ENCODE measurements at regions of chr12 and their contacts with region 1.

Region 1: DNA sequence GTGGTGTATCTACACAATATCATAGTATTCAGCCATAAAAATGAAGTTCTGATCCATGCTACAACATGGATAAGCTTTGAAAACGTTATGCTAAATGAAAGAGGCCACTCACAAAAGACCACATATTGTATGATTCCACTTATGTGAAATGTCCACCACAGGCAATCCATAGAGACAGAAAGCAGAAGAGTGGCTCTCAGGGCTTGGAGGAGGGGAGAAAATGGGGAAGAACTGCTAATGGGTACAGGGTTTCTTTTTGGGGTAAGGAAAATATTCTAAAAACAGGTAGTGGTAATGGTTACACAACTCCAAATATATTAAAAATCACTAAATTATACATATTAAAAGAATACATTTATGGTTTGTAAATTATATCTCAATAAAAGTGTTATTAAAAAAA is 16.5 kb downstream of the SCNN1A start:
- DNase-seq: no peak
- H3K4me3 ChIP-seq: no peak overlapping the region
- H3K27ac ChIP-seq: no peak overlapping the region
- H3K4me1 ChIP-seq: peaks cover 8% of the 10 kb centered on the region
- H3K27me3 ChIP-seq: no peaks in the 10 kb centered on the region
- CTCF ChIP-seq: no peak

Region 2: DNA sequence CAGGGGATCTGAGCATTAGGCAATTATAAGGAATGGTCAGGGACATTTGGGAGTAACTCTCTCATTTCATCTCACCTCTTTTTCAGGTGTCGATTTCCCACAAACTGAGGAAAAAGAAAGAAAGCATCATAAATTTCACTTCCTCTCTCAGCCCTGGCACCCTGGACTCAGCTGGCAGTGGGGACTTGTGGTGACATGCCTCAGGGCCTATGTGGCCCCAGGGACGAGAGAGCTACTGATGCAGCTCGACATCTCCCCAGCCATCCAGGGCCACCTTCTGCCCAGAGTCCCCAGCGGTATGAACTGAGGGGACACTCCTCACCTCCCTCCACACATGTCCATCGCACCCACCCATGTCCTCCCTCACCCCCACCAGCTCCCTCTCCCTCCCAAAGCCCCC is 28.7 kb before region 1 on chr12:
- CTCF ChIA-PET with region 1: no interaction called
- POLR2A ChIA-PET with region 1: interaction called, 10 read pairs
- intact Hi-C with region 1: no loop called
- DNase-seq: no peak
- H3K4me3 ChIP-seq: no peak overlapping the region
- H3K27ac ChIP-seq: no peak overlapping the region
- H3K4me1 ChIP-seq: peaks cover 11% of the 10 kb centered on the region
- H3K27me3 ChIP-seq: no peaks in the 10 kb centered on the region
- CTCF ChIP-seq: no peak

Region 3: GRCh38 chr12:6336079-6336888 is 22.6 kb before region 1 on chr12:
- CTCF ChIA-PET with region 1: interaction called, 10 read pairs
- POLR2A ChIA-PET with region 1: interaction called, 13 read pairs
- intact Hi-C with region 1: no loop called
- DNase-seq: peak; percentile 97
- H3K4me3 ChIP-seq: peak overlapping the region; percentile 37
- H3K27ac ChIP-seq: peak overlapping the region; percentile 91
- H3K4me1 ChIP-seq: peaks cover 57% of the 10 kb centered on the region
- H3K27me3 ChIP-seq: no peaks in the 10 kb centered on the region
- CTCF ChIP-seq: no peak

Region 4: DNA sequence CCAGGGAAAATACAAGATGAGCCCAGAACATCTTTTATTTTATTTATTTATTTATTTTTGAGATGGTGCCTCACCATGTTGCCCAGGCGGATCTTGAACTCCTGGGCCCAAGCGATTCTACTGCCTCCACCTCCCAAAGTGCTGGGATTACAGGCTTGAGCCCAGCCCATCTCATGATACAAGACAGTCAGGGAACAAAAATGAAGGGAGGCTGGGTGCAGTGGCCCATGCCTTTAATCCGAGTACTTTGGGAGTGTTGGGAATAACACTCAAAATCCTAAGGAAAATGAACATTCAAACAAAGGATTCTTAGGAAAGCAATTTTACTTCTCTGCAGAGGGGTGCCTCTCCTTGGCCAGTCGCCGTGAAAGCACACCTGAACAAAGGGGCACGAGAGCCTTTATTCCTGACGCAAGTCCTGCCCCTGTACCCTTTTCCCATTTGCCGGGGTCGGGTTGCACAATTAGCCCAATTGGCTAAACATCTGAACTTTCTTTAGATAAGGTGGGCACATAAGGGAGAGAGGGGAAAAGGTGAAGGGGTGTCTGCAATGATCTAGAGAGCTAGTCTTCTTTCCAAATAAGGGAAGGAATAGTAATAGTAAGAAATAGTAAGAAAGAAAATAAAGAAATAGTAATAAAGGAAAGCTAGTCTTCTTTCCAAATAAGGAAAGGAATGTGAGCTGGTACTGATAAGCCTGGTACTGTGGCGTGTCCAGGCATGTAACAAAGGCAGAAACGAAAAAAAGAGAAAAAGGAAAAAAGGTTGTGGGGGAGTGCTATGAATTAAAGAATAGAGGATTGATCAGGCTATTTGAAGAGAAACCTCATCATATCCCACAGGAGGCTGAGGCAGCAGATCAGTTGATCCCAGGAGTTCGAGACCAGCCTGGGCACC is 148.5 kb after region 1 on chr12:
- CTCF ChIA-PET with region 1: no interaction called
- POLR2A ChIA-PET with region 1: no interaction called
- intact Hi-C with region 1: no loop called
- DNase-seq: no peak
- H3K4me3 ChIP-seq: no peak overlapping the region
- H3K27ac ChIP-seq: peak overlapping the region; percentile 52
- H3K4me1 ChIP-seq: peaks cover 5% of the 10 kb centered on the region
- H3K27me3 ChIP-seq: no peaks in the 10 kb centered on the region
- CTCF ChIP-seq: no peak